ENCODE measurements at regions of chr12 and their contacts with region 1.

Region 1: DNA sequence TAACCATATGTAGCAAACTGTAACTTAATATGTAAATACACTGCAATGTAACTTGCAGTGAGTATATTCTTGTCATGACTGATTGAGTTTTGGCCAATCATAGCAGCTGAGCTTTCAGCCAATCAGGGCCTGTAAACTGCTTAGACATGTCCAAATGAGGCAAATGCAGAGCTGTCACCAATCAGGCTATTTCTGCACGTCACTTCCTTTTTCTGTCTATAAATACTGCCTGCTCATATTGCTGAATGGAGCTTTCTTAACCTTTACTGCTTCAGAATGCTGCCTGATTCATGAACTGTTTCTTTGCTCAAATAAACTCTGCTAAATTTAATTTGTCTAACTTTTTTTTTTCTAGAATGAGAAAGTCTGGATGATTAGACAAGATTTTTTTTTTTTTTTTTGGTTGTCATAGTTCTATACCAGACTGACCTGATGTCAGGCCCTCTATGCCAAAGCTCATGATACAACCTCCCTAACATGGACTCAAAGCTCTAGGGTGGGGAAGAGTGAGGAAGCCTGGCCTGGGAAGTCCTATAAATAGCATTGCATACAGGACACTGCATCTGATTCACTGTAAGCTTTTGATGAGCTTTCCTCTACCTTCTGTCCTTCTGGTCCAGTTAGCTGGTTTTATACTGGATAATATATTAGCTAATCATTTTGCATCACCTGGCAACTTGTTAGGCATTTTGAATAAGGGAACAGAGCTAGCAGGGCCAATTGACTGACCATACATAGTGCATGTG is 12.0 kb downstream of the MGP start:
- DNase-seq: no peak
- H3K4me3 Mint-ChIP-seq: no peak overlapping the region
- H3K27ac Mint-ChIP-seq: no peak overlapping the region
- H3K4me1 Mint-ChIP-seq: no peaks in the 10 kb centered on the region
- H3K27me3 Mint-ChIP-seq: no peaks in the 10 kb centered on the region

Region 2: GRCh38 chr12:14460212-14460841 is 413.3 kb before region 1 on chr12:
- CTCF ChIA-PET with region 1: interaction called, 11 read pairs
- intact Hi-C with region 1: no loop called
- DNase-seq: peak; percentile 25
- H3K4me3 Mint-ChIP-seq: no peak overlapping the region
- H3K27ac Mint-ChIP-seq: peak overlapping the region; percentile 17
- H3K4me1 Mint-ChIP-seq: peaks cover 37% of the 10 kb centered on the region
- H3K27me3 Mint-ChIP-seq: no peaks in the 10 kb centered on the region

Region 3: DNA sequence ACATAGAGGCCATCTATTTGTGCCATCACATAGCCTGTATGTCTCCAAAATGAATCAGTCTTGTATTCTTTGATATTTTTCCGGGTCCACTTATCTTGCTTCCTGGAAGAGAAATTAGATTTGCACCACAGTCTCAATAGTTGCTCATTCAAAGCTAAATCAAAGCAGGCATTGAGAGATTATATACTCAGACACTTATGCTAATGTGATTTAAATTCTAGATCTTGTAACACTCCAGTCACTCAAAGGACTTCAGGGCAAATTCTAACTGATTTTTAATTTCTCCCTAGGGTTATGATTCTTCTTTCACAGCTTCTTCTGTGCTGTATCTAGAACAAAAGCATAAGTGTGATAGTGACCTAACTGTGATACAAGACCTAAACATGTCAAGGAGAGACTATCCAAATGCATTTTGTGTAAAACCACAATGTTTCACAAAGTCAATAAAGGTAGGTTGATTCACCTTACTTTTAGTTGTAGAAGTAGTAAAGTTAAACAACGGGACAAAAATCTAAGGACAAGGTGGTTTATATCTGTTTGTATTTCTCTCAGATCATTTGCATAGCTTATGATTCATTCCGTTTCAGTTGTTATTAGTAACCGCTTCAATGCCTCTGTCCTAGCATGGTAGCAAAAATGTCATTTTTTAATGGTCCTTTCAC is 332.7 kb before region 1 on chr12:
- CTCF ChIA-PET with region 1: no interaction called
- intact Hi-C with region 1: no loop called
- DNase-seq: no peak
- H3K4me3 Mint-ChIP-seq: no peak overlapping the region
- H3K27ac Mint-ChIP-seq: no peak overlapping the region
- H3K4me1 Mint-ChIP-seq: no peaks in the 10 kb centered on the region
- H3K27me3 Mint-ChIP-seq: peaks cover 2% of the 10 kb centered on the region

Region 4: GRCh38 chr12:14854586-14855183 is 18.9 kb before region 1 on chr12:
- CTCF ChIA-PET with region 1: interaction called, 3 read pairs
- intact Hi-C with region 1: loop called (anchors 2 kb)
- DNase-seq: no peak
- H3K4me3 Mint-ChIP-seq: no peak overlapping the region
- H3K27ac Mint-ChIP-seq: no peak overlapping the region
- H3K4me1 Mint-ChIP-seq: no peaks in the 10 kb centered on the region
- H3K27me3 Mint-ChIP-seq: no peaks in the 10 kb centered on the region